ENCODE measurements at regions of chr5 and their contacts with region 1.

Region 1: DNA sequence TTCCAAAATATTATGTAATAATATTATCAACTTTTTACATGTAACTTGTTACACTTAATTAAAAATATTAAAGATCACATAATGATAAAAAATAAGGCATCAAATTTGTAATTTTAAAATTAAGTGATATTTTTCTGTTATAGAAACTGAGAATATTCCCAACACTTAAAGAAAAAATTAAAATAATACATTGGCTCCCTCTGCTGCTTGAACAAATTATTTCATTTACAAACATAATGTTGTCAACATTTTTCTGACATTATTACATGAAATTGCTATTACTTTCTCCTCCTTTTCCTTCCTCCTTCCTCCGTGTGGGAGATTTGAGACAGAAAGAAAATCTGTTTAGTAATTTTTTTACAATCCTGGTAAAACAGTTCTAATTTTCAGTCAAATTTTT is 42.3 kb downstream of the RNF180 start:
- DNase-seq: no peak
- ATAC-seq: no peak
- H3K4me3 ChIP-seq: no peak overlapping the region
- H3K27ac ChIP-seq: no peak overlapping the region
- H3K4me1 ChIP-seq: peaks cover 2% of the 10 kb centered on the region
- H3K27me3 ChIP-seq: no peaks in the 10 kb centered on the region

Region 2: GRCh38 chr5:64074533-64074932 is 133.4 kb before region 1 on chr5:
- intact Hi-C with region 1: loop called in 2 of 4 experiments (anchors 10 kb)
- DNase-seq: no peak
- ATAC-seq: peak in 1 of 2 donors; percentile 26
- H3K4me3 ChIP-seq: no peak overlapping the region
- H3K27ac ChIP-seq: no peak overlapping the region
- H3K4me1 ChIP-seq: no peaks in the 10 kb centered on the region
- H3K27me3 ChIP-seq: no peaks in the 10 kb centered on the region

Region 3: GRCh38 chr5:64147849-64148441 is 60.0 kb before region 1 on chr5:
- intact Hi-C with region 1: loop called (anchors 5 to 10 kb)
- DNase-seq: peak; percentile 71 to 84 (median 84)
- ATAC-seq: peak; percentile 71 to 76
- H3K4me3 ChIP-seq: no peak overlapping the region
- H3K27ac ChIP-seq: no peak overlapping the region
- H3K4me1 ChIP-seq: no peaks in the 10 kb centered on the region
- H3K27me3 ChIP-seq: no peaks in the 10 kb centered on the region

Measured in right cardiac atrium (tissue), 5 donors.